ENCODE measurements at regions of chr11 and their contacts with region 1.

Region 1: GRCh38 chr11:72238040-72238450 is 5.9 kb downstream of the PHOX2A start:
- H3K4me3 ChIP-seq: no peak overlapping the region
- H3K27ac ChIP-seq: no peak overlapping the region
- H3K4me1 ChIP-seq: no peaks in the 10 kb centered on the region
- CTCF ChIP-seq: peak; percentile 30; the same call in 1 of the 2 replicates

Region 2: DNA sequence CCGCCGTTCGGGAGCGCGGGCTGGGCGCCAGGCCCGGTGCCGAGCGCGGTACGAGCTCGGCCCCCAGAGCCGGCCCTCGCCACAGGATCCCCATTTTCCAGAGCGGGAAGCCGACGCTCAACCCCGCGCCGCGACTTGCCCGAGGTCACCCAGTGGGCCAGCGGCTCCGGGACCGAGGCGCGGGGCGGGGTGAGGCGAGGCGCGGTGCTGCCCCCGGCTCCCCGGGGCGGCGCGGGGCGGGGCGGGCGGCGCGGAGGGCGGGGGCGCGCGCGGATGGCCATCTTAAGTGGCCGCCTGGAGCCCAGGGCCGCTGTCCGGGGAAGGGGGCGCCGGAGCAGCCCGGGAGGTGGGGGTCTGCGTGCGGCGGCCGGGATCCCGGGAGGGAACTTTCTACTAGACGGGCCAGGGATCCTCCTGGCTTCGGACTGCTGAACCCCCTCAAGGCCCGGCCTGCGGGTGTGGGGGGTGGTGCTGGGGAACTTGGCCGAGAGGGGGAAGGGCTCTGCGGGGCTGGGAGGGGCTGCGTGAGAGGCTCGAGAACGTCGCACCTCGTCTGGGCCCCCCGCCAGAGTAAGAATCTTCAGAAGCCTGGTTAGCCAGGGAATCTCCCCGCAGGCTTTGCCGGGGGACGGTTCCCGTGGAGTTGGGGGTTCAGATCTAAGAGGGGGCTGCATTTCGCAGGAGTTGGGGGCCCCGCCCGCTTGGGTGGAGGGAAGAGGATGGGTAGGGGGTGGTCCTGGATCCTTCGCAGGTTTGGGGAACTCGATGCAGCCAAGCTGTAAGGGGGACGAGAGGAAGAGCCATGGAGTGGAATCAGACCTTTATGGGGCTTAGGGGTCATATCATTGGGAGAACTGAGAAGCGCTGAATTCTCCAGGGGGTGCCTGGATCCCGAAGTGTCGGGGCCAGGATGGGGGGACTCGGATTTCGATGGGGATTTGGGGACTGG is 14.2 kb before region 1 on chr11:
- CTCF ChIA-PET with region 1: interaction called, 26 read pairs
- POLR2A ChIA-PET with region 1: interaction called, 42 read pairs
- H3K4me3 ChIP-seq: peak overlapping the region; percentile 75
- H3K27ac ChIP-seq: peak overlapping the region; percentile 92
- H3K4me1 ChIP-seq: peaks cover 3% of the 10 kb centered on the region; the same call in 1 of the 2 replicates
- CTCF ChIP-seq: no peak

Measured in HEK293 (cell line).